ENCODE measurements at regions of chr7 and their contacts with region 1.

Region 1: GRCh38 chr7:32115831-32116230 is 45.6 kb upstream of the PDE1C start:
- DNase-seq: no peak
- H3K4me3 ChIP-seq: no peak overlapping the region
- H3K27ac ChIP-seq: no peak overlapping the region
- H3K4me1 ChIP-seq: no peaks in the 10 kb centered on the region
- H3K27me3 ChIP-seq: no peaks in the 10 kb centered on the region
- CTCF ChIP-seq: no peak
- POLR2A ChIP-seq: no peak

Region 2: DNA sequence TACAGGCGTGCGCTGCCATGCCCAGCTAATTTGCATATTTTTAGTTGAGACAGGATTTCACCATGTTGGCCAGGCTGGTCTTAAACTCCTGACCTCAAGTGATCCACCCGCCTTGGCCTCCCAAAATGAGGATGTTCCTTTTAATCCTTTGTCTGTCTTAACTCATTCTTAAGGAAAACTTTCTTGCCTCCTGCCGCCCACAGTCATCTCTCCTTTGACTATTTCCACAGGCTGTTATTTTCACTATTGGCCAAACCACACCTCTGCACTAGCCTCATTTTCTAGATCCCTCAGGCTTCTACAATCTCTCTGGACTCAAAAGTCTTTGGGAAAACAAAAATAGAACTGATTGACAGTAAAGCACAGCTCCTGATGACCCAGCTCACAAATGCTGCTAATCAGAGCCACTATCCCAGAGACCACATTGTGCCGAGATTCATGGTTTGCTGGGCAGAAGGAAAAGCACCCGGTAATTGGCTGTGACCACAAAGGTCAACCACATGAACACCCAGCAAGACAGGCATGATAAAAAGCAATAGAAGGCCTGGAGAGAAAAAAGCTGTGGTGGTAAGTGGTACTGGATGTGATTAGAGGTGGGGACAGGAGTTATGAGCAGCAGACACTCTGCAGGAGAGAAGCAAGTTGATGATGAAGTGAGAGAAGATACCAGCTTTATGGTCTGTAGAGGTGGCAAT is 1875.6 kb before region 1 on chr7:
- intact Hi-C with region 1: loop called (anchors 10 kb)
- DNase-seq: no peak
- H3K4me3 ChIP-seq: no peak overlapping the region
- H3K27ac ChIP-seq: no peak overlapping the region
- H3K4me1 ChIP-seq: no peaks in the 10 kb centered on the region
- H3K27me3 ChIP-seq: no peaks in the 10 kb centered on the region
- CTCF ChIP-seq: no peak
- POLR2A ChIP-seq: no peak

Region 3: GRCh38 chr7:32415936-32416335 is 300.1 kb after region 1 on chr7:
- intact Hi-C with region 1: no loop called
- DNase-seq: no peak
- H3K4me3 ChIP-seq: no peak overlapping the region
- H3K27ac ChIP-seq: no peak overlapping the region
- H3K4me1 ChIP-seq: no peaks in the 10 kb centered on the region
- H3K27me3 ChIP-seq: no peaks in the 10 kb centered on the region
- CTCF ChIP-seq: no peak
- POLR2A ChIP-seq: no peak